ENCODE measurements at regions of chr1 and their contacts with region 1.

Region 1: GRCh38 chr1:172278478-172278877 is 142.0 kb upstream of the C1orf105 start:
- DNase-seq: no peak
- H3K4me3 Mint-ChIP-seq: no peak overlapping the region
- H3K27ac Mint-ChIP-seq: no peak overlapping the region
- H3K4me1 Mint-ChIP-seq: peaks cover 14% of the 10 kb centered on the region
- H3K27me3 Mint-ChIP-seq: no peaks in the 10 kb centered on the region

Region 2: GRCh38 chr1:171817511-171818265 is 460.8 kb before region 1 on chr1:
- intact Hi-C with region 1: loop called (anchors 10 kb)
- DNase-seq: peak; percentile 78
- H3K4me3 Mint-ChIP-seq: peak overlapping the region; percentile 57
- H3K27ac Mint-ChIP-seq: peak overlapping the region; percentile 86
- H3K4me1 Mint-ChIP-seq: peaks cover 18% of the 10 kb centered on the region
- H3K27me3 Mint-ChIP-seq: no peaks in the 10 kb centered on the region

Measured in activated CD4-positive, alpha-beta T cell treated with anti-CD3 and anti-CD28 coated beads, Interleukin-2, amount 10 ng/mL, durations not matched to agents 24 days and 14 days (primary cell).